Activated naive CD4-positive, alpha-beta T cell treated with anti-CD3 and anti-CD28 coated beads for 36 hours (primary cell): ENCODE measurements at regions of chr22 and their contacts with region 1.

Region 1: DNA sequence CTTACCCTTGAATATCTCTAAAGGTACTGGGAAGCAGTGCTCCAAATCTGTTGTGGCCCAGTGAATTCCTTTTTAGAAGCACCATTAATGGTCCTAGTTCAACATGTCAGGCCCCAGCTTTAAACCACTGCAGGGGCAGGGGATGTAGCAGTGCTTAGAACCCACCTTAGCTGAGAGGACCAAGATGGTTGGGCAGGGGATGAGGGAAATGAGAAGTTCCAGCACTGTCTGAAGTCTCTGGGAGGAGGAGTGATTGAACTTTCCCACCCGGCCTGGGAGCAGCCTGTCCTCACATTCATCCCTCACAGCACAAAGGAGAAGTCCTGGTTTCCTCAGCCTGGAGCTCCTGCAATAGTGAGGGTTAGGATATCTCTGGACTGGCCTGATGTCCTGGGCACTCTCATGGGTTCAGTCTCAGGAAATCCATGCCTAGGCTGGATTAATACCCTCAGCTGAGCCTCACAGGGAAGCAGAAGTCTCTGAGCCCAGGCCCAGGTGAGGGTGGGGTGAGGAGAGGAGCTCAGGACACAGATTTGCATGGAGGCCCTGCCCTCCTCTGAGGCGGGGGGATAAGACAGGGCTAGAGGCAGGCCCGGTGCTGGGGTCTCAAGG is 28.6 kb upstream of the PRAME start:
- DNase-seq: no peak
- H3K4me3 Mint-ChIP-seq: no peak overlapping the region
- H3K27ac Mint-ChIP-seq: no peak overlapping the region
- H3K4me1 Mint-ChIP-seq: no peaks in the 10 kb centered on the region
- H3K27me3 Mint-ChIP-seq: peaks cover 4% of the 10 kb centered on the region

Region 2: DNA sequence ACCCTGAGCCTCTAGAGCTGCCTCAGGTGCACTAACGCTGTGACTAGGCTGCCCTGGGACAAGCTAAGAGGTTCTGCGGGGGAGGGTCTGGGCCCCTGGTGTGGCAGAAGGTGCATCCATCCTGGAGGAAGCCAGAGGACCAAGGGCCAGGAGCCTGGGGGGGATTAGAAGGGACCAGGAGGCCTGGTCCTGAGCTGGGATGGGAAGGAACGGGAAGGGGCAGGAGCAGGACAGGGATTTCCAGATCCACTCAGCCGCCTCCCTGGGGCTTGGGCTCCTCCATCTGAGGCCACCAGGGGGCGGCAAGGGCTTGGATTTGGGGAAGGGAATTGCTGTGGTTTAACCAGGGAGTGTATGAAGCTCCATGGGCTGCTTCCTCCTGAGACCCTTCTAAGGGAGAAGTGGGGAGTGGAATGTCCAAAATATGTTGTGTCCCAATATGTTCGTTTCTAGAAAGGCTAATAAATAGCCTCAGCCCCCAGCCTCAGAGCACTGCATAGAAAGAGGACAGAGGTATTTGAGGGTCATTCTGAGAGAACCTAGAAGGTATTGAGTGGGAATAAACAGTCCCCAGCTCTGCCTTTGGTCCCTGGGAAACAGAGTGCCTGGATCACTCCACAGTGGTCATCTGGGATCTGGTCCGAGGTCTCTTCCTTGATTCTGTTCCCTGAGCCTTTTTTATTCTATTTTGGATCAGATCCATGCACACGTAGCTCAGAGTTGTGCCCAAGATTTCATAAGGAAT is 11.3 kb before region 1 on chr22:
- CTCF ChIA-PET with region 1: interaction called, 30 read pairs
- intact Hi-C with region 1: no loop called
- DNase-seq: peak; percentile 55
- H3K4me3 Mint-ChIP-seq: no peak overlapping the region
- H3K27ac Mint-ChIP-seq: no peak overlapping the region
- H3K4me1 Mint-ChIP-seq: no peaks in the 10 kb centered on the region
- H3K27me3 Mint-ChIP-seq: no peaks in the 10 kb centered on the region

Region 3: GRCh38 chr22:22616636-22617035 is 29.0 kb after region 1 on chr22:
- CTCF ChIA-PET with region 1: interaction called, 11 read pairs
- intact Hi-C with region 1: no loop called
- DNase-seq: peak; percentile 53
- H3K4me3 Mint-ChIP-seq: no peak overlapping the region
- H3K27ac Mint-ChIP-seq: no peak overlapping the region
- H3K4me1 Mint-ChIP-seq: peaks cover 10% of the 10 kb centered on the region
- H3K27me3 Mint-ChIP-seq: no peaks in the 10 kb centered on the region

Region 4: DNA sequence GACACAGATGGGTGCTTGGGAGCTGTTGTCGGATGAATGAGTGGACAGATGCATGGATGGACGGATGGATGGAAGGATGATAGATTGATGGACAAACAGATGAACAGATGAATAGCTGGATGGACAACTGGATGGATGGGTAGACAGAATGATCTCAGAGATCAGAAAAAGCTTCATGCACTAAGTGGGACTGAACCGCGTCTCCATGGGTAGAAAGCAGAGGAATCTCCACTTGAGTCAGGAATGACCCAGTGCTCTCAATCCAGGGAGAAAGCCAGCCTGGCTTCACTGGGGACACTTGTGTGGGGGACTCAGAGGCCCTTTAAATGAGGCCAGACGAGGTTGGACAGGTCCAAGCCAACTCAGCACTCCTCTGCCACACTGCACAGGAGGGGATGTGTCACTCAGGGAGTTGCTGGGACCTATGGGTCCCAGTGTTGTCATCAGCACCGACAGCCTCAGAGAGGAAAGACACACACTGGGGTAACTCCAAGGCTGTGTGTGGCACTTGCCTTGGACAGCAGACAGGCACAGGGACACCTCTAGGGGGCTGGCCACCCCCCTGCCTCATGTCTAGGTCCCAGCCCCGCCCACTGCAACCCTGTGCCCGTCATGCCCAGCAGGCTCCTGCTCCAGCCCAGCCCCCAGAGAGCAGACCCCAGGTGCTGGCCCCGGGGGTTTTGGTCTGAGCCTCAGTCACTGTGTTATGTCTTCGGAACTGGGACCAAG is 305.6 kb after region 1 on chr22:
- CTCF ChIA-PET with region 1: no interaction called
- intact Hi-C with region 1: no loop called
- DNase-seq: no peak
- H3K4me3 Mint-ChIP-seq: no peak overlapping the region
- H3K27ac Mint-ChIP-seq: no peak overlapping the region
- H3K4me1 Mint-ChIP-seq: no peaks in the 10 kb centered on the region
- H3K27me3 Mint-ChIP-seq: no peaks in the 10 kb centered on the region